ENCODE measurements at regions of chr12 and their contacts with region 1.

Region 1: DNA sequence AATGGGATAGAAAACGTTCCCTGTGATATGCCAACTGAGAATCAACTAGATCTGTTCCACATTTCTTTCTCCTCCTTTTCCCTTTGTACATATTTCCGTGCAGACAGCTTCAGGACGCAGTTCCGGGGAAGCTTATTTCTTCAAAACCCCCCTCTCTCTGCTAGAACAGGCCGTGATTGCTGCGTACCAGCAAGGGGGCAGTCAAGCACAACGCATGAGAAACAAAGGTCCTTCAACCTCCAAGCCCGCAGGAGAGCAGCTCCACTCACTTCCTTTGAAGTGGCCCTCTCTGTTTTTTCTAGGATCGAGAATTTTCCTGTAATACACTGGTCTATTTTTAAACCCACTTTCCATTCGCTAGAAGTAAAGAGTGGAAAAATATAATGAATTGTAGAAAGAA is 80.8 kb downstream of the ZNF664 start:
- DNase-seq: peak; percentile 48
- ATAC-seq: peak; percentile 83
- H3K4me3 ChIP-seq: no peak overlapping the region
- H3K27ac ChIP-seq: no peak overlapping the region
- H3K4me1 ChIP-seq: no peaks in the 10 kb centered on the region
- H3K27me3 ChIP-seq: peaks cover 6% of the 10 kb centered on the region
- CTCF ChIP-seq: peak; percentile 61
- POLR2A ChIP-seq: no peak
- RAD21 ChIP-seq: peak; percentile 65

Region 2: GRCh38 chr12:124321040-124321481 is 267.2 kb after region 1 on chr12:
- CTCF ChIA-PET with region 1: no interaction called
- POLR2A ChIA-PET with region 1: no interaction called
- dilution Hi-C with region 1: no loop called
- in situ Hi-C with region 1: no loop called
- intact Hi-C with region 1: loop called (anchors 5 kb)
- DNase-seq: peak; percentile 39
- ATAC-seq: peak; percentile 93
- H3K4me3 ChIP-seq: no peak overlapping the region
- H3K27ac ChIP-seq: no peak overlapping the region
- H3K4me1 ChIP-seq: no peaks in the 10 kb centered on the region
- H3K27me3 ChIP-seq: peaks cover 19% of the 10 kb centered on the region; the same call in 1 of the 2 replicates
- CTCF ChIP-seq: peak; percentile 82
- POLR2A ChIP-seq: peak; percentile 30; the same call in 1 of the 2 replicates
- RAD21 ChIP-seq: peak; percentile 86